ENCODE measurements at regions of chr11 and their contacts with region 1.

Region 1: DNA sequence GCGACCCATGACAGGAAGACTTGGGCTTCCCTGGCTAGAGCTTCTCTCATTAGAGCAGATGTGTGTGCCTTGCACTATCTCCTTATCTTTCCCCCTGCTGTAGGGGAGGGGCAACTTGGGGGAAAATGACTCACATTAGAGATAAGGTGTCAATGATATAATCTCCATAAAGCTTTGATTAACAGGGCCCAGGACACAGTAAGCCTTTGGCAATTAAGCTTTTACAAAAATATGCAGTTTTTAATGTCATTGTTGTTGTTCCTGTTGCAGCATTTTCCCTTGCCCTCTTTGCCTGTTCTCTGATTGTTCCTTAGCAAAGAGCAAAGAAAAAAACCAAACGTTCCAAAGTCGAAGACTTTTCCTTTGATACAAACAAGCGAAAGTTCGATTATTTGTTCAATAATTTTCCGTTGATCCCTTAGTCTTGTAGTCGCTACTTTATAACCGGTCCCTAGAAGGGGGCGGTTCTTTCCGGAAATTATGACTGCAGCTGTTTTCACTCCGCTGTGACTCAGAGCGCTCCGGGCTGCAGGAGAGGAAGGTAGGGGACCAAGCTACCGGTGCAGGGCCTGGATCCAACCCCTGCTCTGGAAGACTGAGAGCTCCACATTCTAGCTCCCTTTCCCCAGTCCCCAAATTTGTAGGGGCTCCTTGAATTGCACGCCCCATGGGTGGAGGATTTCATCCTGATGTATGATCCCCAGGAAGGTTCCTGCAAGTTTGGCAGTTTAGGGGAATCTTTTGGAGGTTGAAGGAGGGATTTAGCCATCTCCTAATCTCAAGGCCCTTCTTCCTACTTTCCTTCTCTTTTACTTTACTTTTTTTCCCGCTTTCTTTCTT is at the start of gene VWA5A:
- DNase-seq: peak; percentile 53 to 71 (median 62)
- H3K4me3 ChIP-seq: peak within 1 kb of the TSS; percentile 70 to 75
- H3K4me3 Mint-ChIP-seq: peak within 1 kb of the TSS; percentile 87 to 96 (median 90)
- H3K27ac ChIP-seq: peak within 1 kb of the TSS; percentile 2
- H3K27ac Mint-ChIP-seq: peak within 1 kb of the TSS; percentile 43 to 91 (median 76)
- H3K4me1 ChIP-seq: peaks cover 12% of the 10 kb centered on the region
- H3K4me1 Mint-ChIP-seq: peaks cover 7 to 33% (median 18%) of the 10 kb centered on the region in 4 donors
- H3K27me3 ChIP-seq: no peaks in the 10 kb centered on the region
- H3K27me3 Mint-ChIP-seq: peaks cover 3 to 8% of the 10 kb centered on the region in 2 donors
- total RNA-seq, gene VWA5A: 6.4 to 7.2 TPM

Region 2: DNA sequence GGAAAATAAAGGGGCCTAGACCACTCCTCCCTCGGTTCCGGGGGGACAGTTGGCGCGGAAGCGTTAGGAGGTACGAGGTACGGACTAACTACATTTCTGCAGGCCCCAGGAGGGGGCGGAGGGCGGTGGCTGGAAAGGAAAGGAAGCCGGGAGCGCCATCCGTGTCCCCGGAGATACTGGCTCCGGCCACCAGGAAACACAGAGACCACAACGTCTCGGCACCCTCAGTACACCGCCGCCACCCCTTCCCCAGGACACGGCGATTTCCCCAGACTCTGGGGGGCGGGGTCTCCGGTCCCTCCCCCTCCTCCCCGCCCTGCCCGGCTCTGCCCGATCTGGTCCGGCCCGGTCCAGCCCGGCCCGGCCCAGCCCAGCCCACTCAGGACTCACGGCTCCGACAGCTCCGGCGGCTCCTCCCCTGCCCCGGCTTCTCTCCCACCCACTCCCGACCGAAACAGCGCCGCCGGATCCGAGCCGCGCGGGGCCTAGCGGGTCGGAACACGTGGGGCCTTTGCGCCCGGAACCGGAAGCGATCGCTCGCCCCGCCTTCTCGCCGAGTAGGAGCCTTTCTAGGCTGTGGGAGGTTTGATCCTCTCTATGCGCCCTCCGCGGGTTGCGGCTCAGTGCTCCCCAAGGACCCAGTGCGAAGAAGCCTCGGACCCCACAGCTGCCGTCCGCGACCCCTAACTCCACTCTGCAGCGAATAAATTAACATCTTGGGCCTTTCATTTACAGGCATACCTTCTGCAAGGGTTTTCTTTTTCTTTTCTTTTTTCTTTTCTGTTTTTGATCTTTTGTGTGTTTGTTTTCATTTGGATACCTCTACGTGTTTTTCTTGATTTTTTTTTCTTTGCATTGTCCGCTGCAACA is 373.8 kb before region 1 on chr11 and contains the start of gene ZNF202:
- CTCF ChIA-PET with region 1: no interaction called
- POLR2A ChIA-PET with region 1: no interaction called
- intact Hi-C with region 1: loop called (anchors 10 kb)
- DNase-seq: peak; percentile 89 to 91 (median 89)
- H3K4me3 ChIP-seq: peak within 1 kb of the TSS; percentile 70 to 80
- H3K4me3 Mint-ChIP-seq: peak within 1 kb of the TSS; percentile 91 to 99 (median 98)
- H3K27ac ChIP-seq: peak within 1 kb of the TSS; percentile 69
- H3K27ac Mint-ChIP-seq: peak within 1 kb of the TSS; percentile 81 to 98 (median 96)
- H3K4me1 ChIP-seq: peaks cover 27% of the 10 kb centered on the region
- H3K4me1 Mint-ChIP-seq: peaks cover 27 to 55% (median 37%) of the 10 kb centered on the region in 4 donors
- H3K27me3 ChIP-seq: no peaks in the 10 kb centered on the region
- H3K27me3 Mint-ChIP-seq: peaks cover 0 to 3% of the 10 kb centered on the region in 2 donors
- total RNA-seq, gene ZNF202: 17.4 to 21.6 TPM